ENCODE measurements at regions of chrX and their contacts with region 1.

Region 1: DNA sequence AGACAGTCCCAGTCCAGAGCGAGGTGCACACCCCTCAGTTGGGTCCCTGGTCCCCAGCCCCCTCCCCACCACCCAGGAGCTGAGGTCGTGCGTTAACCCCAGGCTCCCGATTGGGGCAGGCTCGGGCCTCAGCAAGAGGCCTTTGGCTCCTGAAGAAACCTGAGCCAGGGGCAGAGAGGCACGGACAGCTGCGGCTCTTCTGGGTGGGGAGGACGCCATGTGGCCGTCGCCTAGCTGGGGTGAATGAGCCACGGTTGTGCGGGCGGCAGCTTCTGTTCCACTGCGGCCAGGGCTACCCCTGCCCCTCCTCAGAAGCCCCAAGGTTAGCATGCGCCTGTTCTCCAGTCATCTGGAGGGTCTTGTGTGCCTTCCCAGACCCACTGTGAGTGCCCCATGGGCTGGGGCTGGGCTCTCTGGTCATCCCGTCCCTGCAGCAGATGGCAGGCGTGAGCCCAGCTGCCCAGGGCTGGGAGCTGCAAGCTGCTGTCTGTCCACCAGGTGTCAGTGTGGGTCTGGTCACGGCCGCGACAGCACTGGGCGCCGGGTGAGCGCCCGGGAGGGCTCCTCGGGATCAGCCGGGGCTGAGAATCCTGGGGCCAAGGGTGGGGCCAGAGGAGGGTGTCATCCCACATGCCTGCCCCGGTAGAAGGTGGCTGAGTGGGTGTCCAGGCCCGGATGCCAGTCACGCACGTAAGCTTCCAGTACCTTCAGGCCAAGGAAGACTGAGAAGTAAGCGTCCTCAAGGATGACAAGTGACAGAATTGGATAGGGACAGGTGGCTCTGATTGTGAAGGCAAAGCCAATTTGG is 21.9 kb downstream of the ATP2B3 start:
- DNase-seq: peak; percentile 67
- H3K4me3 ChIP-seq: no peak overlapping the region
- H3K27ac ChIP-seq: no peak overlapping the region
- H3K4me1 ChIP-seq: no peaks in the 10 kb centered on the region
- H3K27me3 ChIP-seq: no peaks in the 10 kb centered on the region
- CTCF ChIP-seq: peak; percentile 50 to 72 (median 61)
- POLR2A ChIP-seq: no peak

Region 2: GRCh38 chrX:153635788-153636622 is 96.6 kb after region 1 on chrX:
- intact Hi-C with region 1: no loop called
- DNase-seq: no peak
- H3K4me3 ChIP-seq: no peak overlapping the region
- H3K27ac ChIP-seq: no peak overlapping the region
- H3K4me1 ChIP-seq: no peaks in the 10 kb centered on the region
- H3K27me3 ChIP-seq: no peaks in the 10 kb centered on the region
- CTCF ChIP-seq: no peak
- POLR2A ChIP-seq: no peak

Region 3: GRCh38 chrX:153667956-153668396 is 128.6 kb after region 1 on chrX:
- intact Hi-C with region 1: loop called (anchors 5 kb)
- DNase-seq: peak; percentile 94
- H3K4me3 ChIP-seq: no peak overlapping the region
- H3K27ac ChIP-seq: no peak overlapping the region
- H3K4me1 ChIP-seq: no peaks in the 10 kb centered on the region
- H3K27me3 ChIP-seq: no peaks in the 10 kb centered on the region
- CTCF ChIP-seq: peak; percentile 69 to 72 (median 71)
- POLR2A ChIP-seq: no peak

Region 4: DNA sequence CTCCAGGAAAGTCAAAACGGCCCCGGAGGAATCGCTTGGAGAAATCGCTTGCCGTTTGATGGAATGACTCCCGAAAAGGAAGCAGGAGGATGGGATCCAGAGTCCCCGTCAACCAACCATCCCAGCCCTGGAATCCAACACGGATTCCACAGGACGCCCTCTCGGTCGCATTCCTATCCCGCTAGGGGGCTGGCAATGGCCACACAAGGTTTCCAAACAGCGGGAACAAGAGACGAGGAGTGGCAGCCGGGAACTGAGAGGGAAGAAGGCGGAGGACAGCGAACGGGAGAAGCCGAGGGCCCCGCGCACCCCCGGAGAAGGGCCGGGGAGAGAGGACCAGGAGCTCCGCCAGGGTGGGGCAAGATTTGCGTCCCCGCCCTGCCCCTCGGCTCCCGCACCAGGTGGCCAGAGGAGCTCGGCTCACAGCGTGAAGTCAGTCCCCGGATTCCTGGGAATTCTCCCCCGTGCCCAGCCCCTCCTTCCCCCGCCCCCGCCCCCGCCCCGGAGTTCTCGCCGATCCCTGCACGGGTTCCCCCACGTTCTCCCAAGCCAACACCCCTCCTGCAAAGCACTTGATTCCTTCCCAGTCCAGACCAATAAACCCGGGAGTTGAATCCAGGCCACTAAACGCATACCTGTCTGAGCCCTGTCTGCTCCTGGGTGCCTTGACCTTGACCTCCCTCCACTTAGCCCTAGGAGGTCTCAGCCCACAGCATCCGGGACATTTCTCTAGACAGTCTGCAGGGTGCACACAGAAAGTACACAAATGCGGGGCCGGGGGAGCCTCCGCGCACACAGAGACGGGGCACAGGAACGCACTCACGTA is 289.6 kb after region 1 on chrX:
- intact Hi-C with region 1: no loop called
- DNase-seq: no peak
- H3K4me3 ChIP-seq: no peak overlapping the region
- H3K27ac ChIP-seq: no peak overlapping the region
- H3K4me1 ChIP-seq: peaks cover 4% of the 10 kb centered on the region
- H3K27me3 ChIP-seq: no peaks in the 10 kb centered on the region
- CTCF ChIP-seq: no peak
- POLR2A ChIP-seq: no peak

Measured in testis (tissue), 5 donors.